Right ventricle myocardium inferior (tissue), 1 donor: ENCODE measurements at regions of chr10 and their contacts with region 1.

Region 1: DNA sequence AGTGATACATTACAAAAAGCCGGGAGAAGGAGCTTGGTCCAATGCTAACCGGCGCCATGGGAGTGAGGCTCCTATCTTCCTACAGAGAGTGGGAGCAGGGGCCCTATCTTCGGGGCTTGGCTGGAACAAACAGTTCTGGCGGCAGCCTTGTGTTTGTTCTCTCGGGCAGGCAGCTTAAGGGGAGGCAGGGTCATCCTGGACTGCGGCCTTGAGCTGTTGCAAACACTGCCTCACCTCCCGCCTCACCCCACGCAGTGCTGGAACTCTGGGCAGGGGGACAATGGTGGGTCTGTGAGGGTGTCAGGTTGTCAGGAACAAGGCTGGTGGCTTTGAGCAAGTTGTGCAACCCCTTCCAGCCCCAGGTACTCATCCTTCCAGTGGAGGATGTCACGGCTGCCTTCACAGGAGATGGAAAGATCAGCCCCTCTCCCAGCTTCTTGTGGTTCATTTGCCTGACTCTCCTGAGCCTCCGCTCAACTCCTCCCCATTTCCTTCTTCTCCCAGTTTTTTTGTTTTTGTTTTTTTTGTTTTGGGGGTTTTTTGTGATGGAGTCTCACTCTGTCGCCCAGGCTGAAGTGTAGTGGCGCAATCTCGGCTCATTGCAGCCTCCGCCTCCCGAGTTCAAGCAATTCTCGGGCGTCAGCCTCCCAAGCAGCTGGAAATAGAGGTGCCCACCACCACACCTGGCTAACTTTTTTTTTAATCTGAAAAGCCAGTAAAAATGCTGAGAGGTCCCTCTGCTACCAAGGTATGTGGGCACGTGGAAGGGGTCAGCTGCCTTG is 57.4 kb downstream of the SPOCK2 start:
- DNase-seq: peak; percentile 86
- ATAC-seq: peak; percentile 93

Region 2: GRCh38 chr10:71974489-71975021 is 56.4 kb before region 1 on chr10:
- intact Hi-C with region 1: no loop called
- DNase-seq: no peak
- ATAC-seq: peak; percentile 24

Region 3: GRCh38 chr10:71999360-72000072 is 31.4 kb before region 1 on chr10:
- intact Hi-C with region 1: loop called (anchors 5 kb)
- DNase-seq: peak; percentile 91
- ATAC-seq: peak; percentile 89

Region 4: GRCh38 chr10:72016608-72017312 is 14.2 kb before region 1 on chr10:
- intact Hi-C with region 1: loop called (anchors 2 kb)
- DNase-seq: peak; percentile 69
- ATAC-seq: peak; percentile 69